AG04450 (cell line): ENCODE measurements at regions of chr19 and their contacts with region 1.

Region 1: DNA sequence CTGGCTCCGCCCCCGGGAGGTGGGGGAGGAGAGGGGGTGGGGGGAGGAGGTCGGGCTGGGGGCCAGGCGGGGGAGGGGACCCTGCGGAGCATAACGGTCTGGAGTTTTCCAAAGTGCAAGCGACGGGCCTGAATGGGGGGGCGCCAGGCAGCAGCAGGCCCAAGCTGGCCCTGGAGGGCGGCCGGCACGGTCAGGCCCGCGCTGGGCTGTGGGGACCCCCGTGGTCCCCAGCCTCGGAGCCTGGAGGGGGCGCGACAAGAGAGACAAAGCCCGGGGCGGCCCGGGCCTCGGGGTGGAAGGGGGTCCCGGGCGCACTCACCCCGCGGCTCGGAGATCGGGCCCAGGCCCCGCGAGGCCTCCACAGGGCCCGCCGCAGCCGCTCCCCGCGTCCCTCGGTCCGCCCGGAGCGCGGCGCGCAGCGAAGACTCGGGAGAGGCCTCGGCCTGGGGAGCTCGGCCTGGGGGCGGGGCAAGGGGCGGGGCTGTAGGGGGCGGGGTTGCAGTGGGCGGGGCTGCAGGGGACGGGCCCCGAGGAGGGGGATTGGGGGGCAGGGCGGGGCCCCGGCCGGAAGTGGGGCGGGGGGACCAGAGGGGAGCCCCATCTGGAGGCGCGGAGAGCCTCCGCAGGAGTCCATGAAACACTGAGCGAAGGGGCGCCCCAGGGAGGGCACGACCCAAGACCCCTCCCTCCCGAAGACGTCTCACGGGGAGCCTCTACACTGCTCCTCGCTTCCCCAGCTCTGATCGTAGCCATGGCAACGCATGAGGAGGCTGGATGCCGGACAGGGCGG is 47.6 kb downstream of the PTPRS start:
- DNase-seq: peak; percentile 36
- H3K4me3 ChIP-seq: peak overlapping the region; percentile 77
- H3K27ac ChIP-seq: no peak overlapping the region
- H3K27me3 ChIP-seq: no peaks in the 10 kb centered on the region
- CTCF ChIP-seq: no peak

Region 2: DNA sequence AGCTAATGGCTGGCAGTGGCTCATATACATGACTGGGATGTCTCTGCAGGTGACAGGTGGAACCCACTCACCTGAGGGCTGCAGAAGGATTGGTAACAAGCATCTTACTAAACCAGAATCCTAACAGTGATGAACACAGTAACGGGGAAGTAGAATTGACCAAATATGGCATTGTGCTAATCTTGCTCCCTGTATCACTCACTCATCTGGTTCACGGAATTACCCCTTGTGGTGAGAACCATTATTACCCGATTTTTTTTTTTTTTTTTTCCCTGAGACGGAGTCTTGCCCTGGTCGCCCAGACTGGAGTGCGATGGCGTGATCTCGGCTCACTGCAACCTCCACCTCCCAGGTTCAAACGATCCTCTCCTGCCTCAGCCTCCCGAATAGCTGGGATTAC is 21.9 kb before region 1 on chr19:
- CTCF ChIA-PET with region 1: no interaction called
- POLR2A ChIA-PET with region 1: no interaction called
- DNase-seq: no peak
- H3K4me3 ChIP-seq: no peak overlapping the region
- H3K27ac ChIP-seq: no peak overlapping the region
- H3K27me3 ChIP-seq: no peaks in the 10 kb centered on the region
- CTCF ChIP-seq: peak; percentile 28; the same call in 1 of the 2 replicates

Region 3: DNA sequence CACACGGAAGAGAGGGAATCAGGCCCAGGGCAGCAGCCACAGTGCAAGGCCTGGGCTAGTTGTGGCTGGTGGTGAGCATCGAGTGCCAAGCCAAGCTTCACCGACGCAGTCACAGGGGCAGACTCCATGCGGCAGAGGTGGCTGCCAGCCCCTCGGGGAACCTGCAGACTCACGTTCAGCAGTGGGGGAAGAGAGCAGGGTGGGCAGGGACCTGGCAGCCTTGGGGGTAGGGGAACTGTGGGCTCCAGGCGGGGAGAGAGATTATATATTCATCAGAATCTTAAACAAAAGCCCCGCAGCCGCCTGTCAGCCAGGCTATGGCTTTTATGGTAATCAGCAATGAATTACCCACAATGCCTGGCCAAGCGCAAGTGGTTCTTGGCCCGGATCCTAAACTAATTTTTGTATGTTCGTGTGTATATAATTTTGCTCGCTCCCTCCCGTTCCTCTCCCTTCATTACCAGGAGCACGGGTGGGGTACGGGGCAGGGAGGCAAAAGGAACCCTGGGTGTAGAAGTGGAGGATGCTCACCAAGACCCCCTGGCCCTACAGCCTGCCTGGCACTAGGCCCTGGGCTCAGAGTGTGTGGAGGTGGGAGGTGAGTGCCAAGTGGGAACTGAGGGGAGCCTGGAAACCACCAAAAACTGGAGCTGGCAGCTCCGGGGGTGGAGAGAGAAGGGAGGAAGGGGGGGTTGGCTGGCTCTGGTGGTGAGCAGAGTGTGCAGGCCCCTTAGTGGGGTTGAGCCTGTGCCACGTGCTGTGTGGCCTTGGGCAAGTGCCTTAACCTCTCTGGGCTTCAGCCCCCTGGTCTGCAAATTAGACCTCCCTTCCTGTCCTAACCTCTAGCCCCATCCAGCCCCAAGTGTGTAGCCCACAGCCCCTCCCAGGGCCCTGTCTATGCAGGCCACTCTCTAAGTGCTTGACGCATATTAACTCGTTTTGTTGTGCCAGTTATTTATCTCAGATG is 15.7 kb after region 1 on chr19:
- CTCF ChIA-PET with region 1: interaction called, 3 read pairs
- POLR2A ChIA-PET with region 1: interaction called, 30 read pairs
- DNase-seq: peak; percentile 86
- H3K4me3 ChIP-seq: peak overlapping the region; percentile 41
- H3K27ac ChIP-seq: peak overlapping the region; percentile 94
- H3K27me3 ChIP-seq: no peaks in the 10 kb centered on the region
- CTCF ChIP-seq: no peak

Region 4: GRCh38 chr19:5354403-5354802 is 61.4 kb after region 1 on chr19:
- CTCF ChIA-PET with region 1: no interaction called
- POLR2A ChIA-PET with region 1: no interaction called
- DNase-seq: no peak
- H3K4me3 ChIP-seq: no peak overlapping the region
- H3K27ac ChIP-seq: no peak overlapping the region
- H3K27me3 ChIP-seq: peaks cover 13% of the 10 kb centered on the region
- CTCF ChIP-seq: peak; percentile 44

Region 5: DNA sequence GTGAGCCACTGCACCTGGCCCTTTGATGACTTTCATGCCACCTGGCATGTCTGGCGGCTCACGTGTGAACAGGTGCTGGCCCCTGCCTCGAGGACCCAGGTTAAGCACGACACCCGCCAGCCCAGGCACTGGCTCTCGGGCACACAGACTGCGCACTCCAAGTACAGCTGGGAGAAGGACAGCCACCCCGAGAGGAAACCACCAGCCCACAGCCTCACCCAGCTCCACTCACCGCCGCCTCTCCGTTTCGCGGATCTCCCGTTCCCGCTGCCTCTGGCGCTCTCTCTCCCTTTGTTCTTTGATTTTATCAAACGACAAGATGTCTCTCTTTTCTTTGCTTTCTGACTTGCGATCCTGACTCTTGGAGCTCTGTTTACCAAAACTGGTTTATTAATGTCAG is 302.1 kb after region 1 on chr19:
- CTCF ChIA-PET with region 1: no interaction called
- POLR2A ChIA-PET with region 1: no interaction called
- DNase-seq: no peak
- H3K4me3 ChIP-seq: no peak overlapping the region
- H3K27ac ChIP-seq: no peak overlapping the region
- H3K27me3 ChIP-seq: no peaks in the 10 kb centered on the region
- CTCF ChIP-seq: no peak